OCI-LY7 (cell line): ENCODE measurements at regions of chr10 and their contacts with region 1.

Region 1: DNA sequence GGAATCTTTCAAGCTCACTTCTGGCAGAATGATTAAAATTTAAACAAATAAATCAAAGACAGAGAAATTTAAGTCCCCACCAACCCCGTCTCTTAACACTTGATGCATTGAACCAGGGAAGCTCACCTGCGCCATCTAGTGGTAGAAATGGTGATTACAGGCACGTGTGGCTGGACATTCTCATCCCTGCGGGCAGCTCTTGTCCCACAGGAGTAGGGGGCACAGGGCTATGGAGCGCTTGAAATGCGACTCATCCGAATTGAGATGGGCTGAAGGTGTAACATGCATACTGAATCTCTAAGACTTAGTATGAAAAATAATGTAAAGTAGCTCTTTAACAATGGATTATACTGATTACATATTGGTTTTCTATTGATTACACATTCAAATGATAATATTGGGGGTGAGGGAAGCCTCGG is 24.8 kb upstream of the SLIT1 start:
- DNase-seq: peak; percentile 68
- H3K4me3 ChIP-seq: no peak overlapping the region
- H3K27ac ChIP-seq: no peak overlapping the region
- H3K4me1 ChIP-seq: peaks cover 16% of the 10 kb centered on the region
- CTCF ChIP-seq: peak; percentile 100

Region 2: GRCh38 chr10:97072851-97073665 is 137.5 kb before region 1 on chr10:
- CTCF ChIA-PET with region 1: interaction called, 9 read pairs
- POLR2A ChIA-PET with region 1: interaction called, 8 read pairs
- intact Hi-C with region 1: loop called (anchors 1 kb)
- DNase-seq: peak; percentile 79
- H3K4me3 ChIP-seq: no peak overlapping the region
- H3K27ac ChIP-seq: no peak overlapping the region
- H3K4me1 ChIP-seq: no peaks in the 10 kb centered on the region
- CTCF ChIP-seq: peak; percentile 96

Region 3: GRCh38 chr10:97081621-97082235 is 128.8 kb before region 1 on chr10:
- CTCF ChIA-PET with region 1: no interaction called
- POLR2A ChIA-PET with region 1: no interaction called
- intact Hi-C with region 1: loop called (anchors 2 kb)
- DNase-seq: peak; percentile 63
- H3K4me3 ChIP-seq: no peak overlapping the region
- H3K27ac ChIP-seq: no peak overlapping the region
- H3K4me1 ChIP-seq: no peaks in the 10 kb centered on the region
- CTCF ChIP-seq: peak; percentile 74

Region 4: GRCh38 chr10:97138174-97138573 is 72.4 kb before region 1 on chr10:
- CTCF ChIA-PET with region 1: interaction called, 3 read pairs
- POLR2A ChIA-PET with region 1: no interaction called
- intact Hi-C with region 1: loop called (anchors 1 kb)
- DNase-seq: peak; percentile 30
- H3K4me3 ChIP-seq: no peak overlapping the region
- H3K27ac ChIP-seq: no peak overlapping the region
- H3K4me1 ChIP-seq: no peaks in the 10 kb centered on the region
- CTCF ChIP-seq: peak; percentile 78

Region 5: DNA sequence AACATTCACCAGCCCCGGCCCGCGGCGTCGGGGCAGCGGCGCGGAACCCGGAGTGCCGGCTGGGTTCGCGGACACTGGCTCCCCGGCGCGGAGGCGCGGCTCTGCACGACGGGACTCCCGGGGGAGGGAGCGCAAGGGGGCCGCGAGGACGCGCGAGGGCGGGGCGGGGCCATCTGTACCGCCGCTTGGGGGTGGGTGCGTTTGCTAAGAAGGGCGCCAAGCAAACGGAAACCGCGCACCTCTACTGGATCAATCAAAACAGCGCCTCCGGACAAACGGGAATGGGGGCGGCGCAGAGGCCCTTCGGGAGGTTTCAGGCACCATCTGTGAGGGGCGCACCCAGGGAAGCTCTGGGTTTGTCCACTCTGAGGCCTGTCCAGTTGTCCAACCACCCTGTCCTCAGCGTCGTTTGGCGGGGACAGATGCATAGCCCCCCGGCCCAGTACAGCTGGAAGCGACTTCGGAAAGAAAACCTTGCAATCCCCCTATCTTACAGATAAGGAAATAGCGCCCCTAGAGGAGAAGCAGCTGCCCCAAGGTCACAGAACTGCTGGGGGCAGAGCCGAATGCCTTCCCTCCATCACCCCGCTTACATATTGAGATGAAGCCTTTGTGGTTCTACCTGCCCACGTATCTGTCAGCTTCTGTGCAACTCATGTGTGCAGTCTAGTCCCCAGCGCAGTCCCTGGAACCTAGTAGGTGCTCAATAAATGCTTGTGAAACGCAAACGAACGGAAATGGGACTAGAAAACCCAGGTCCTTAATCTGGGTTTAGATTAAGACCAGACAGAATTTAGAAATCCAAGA is 14.1 kb before region 1 on chr10:
- CTCF ChIA-PET with region 1: interaction called, 10 read pairs
- POLR2A ChIA-PET with region 1: interaction called, 11 read pairs
- intact Hi-C with region 1: no loop called
- DNase-seq: peak; percentile 92
- H3K4me3 ChIP-seq: peak overlapping the region; percentile 70
- H3K27ac ChIP-seq: peak overlapping the region; percentile 35
- H3K4me1 ChIP-seq: peaks cover 51% of the 10 kb centered on the region
- CTCF ChIP-seq: peak; percentile 87